G401 (cell line): ENCODE measurements at regions of chr16 and their contacts with region 1.

Region 1: GRCh38 chr16:23155439-23156049 is 6.3 kb upstream of the USP31 start:
- DNase-seq: no peak

Region 2: DNA sequence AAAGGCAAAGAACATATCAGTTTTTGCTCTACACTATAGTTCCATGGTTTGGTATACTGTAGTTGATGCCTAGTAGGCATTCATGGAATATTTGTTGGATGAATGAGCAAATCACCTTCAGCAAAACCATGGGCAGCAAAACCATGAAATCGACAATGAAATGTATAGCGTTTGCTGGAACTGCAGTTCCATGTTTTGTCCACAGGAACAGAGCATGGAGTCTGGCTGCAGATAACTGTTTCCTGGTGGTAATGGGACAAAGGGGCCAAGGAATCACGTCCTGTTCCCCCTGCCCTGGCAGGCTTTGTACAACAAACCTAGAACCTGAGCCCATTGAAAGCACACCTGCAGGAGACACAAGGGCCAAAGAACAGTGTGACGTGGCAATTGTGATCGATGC is 107.4 kb before region 1 on chr16:
- in situ Hi-C with region 1: no loop called
- DNase-seq: no peak

Region 3: GRCh38 chr16:23072084-23072599 is 83.4 kb before region 1 on chr16:
- in situ Hi-C with region 1: no loop called
- DNase-seq: peak; percentile 38

Region 4: DNA sequence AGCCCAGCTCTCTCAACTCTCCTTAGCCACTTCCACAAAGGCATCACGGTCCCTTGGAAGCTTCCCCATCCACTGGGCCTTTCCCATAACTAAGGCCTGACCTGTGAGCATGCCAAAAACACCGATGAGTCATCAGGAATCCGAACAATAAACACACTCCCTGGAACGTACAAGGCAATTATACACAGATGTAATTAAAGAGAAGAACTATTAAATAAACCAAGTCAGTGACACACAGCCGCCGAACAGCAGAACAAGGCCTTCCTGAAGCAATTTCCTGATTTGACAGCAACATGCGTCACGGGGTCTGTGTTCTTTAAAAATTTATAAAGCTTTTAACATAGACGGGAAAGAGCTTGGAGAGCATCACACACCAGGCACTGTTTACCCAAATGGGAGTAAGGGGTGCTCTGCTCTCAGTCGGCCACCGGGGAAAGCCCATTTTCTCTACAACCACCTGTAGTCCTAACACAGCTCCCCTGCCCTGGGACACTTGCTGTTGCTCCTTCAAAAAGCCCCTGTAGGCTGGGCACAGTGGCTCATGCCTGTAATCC is 268.0 kb after region 1 on chr16:
- in situ Hi-C with region 1: loop called (anchors 25 kb)
- DNase-seq: no peak